Activated B cell treated with CpG ODN at 0.5 μM for 24 hours (primary cell): ENCODE measurements at regions of chr6 and their contacts with region 1.

Region 1: GRCh38 chr6:18179770-18180356 is 24.6 kb downstream of the KDM1B start:
- DNase-seq: no peak
- ATAC-seq: no peak
- H3K4me3 Mint-ChIP-seq: peak overlapping the region; percentile 45
- H3K27ac Mint-ChIP-seq: peak overlapping the region; percentile 59
- H3K4me1 Mint-ChIP-seq: peaks cover 40% of the 10 kb centered on the region
- H3K27me3 Mint-ChIP-seq: no peaks in the 10 kb centered on the region
- CTCF ChIP-seq: no peak

Region 2: GRCh38 chr6:18166312-18167036 is 13.4 kb before region 1 on chr6:
- CTCF ChIA-PET with region 1: no interaction called
- POLR2A ChIA-PET with region 1: interaction called, 10 read pairs
- intact Hi-C with region 1: no loop called
- DNase-seq: no peak
- ATAC-seq: no peak
- H3K4me3 Mint-ChIP-seq: no peak overlapping the region
- H3K27ac Mint-ChIP-seq: no peak overlapping the region
- H3K4me1 Mint-ChIP-seq: no peaks in the 10 kb centered on the region
- H3K27me3 Mint-ChIP-seq: no peaks in the 10 kb centered on the region
- CTCF ChIP-seq: no peak